ENCODE measurements at regions of chr7 and their contacts with region 1.

Region 1: DNA sequence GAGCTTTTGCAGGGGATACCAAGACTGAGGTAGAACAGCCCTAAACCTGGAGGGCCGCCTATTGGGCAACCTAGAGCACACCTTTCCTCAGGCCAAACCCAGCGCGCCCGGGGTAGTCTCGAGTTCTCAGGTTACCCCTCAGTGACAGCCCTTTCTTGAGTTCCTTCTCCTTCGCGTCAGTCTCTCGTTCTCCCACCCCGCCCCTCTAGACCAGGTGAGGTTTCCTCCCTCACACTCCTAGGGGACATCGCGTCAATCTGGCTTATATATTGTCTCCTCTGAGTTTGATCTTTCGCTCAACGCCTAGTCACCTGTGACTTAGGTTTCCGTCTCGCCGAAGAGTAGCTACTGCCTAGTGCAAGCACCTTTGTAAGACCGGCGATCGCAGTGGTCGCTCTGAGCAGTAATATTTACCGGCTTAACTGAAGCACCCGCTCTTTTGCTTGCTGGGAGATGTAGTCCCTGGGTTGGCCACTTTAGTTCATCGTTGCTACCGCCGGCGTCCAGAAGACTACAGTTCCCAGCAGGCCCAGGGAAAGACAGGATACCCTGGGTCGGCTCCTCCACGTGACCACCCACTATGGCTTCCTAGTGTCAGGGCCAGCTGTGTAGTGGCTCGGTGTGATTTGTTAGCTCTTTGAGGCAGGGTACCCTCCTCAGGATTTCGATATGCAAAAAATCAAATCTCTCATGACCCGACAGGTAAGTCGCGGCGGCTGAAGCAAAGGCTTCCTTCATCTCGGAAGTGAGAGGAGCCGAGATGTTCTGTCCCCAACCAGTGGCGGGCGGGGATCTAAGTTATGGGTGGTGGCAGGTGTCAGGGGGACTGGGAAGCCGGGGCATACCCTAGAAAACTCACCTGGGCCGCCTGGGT is at the start of gene VPS50:
- DNase-seq: peak; percentile 82 to 97 (median 91)
- ATAC-seq: peak; percentile 95
- H3K4me3 ChIP-seq: peak within 1 kb of the TSS; percentile 88 to 92
- H3K4me3 Mint-ChIP-seq: peak within 1 kb of the TSS; percentile 96
- H3K27ac ChIP-seq: peak within 1 kb of the TSS; percentile 89 to 90
- H3K27ac Mint-ChIP-seq: peak within 1 kb of the TSS; percentile 99
- H3K4me1 ChIP-seq: peaks cover 25% of the 10 kb centered on the region
- H3K4me1 Mint-ChIP-seq: peaks cover 19% of the 10 kb centered on the region
- H3K27me3 ChIP-seq: no peaks in the 10 kb centered on the region
- H3K27me3 Mint-ChIP-seq: no peaks in the 10 kb centered on the region
- CTCF ChIP-seq: no peak
- total RNA-seq, gene VPS50: 17.1 to 20.2 TPM

Region 2: GRCh38 chr7:91880413-91881241 is 1351.4 kb before region 1 on chr7 and contains the start of gene MTERF1:
- CTCF ChIA-PET with region 1: no interaction called
- POLR2A ChIA-PET with region 1: no interaction called
- intact Hi-C with region 1: loop called in 1 of 2 experiments (anchors 5 kb)
- DNase-seq: peak; percentile 82 to 96 (median 95)
- ATAC-seq: peak; percentile 96
- H3K4me3 ChIP-seq: peak within 1 kb of the TSS; percentile 78 to 90
- H3K4me3 Mint-ChIP-seq: peak within 1 kb of the TSS; percentile 94
- H3K27ac ChIP-seq: peak within 1 kb of the TSS; percentile 63 to 77
- H3K27ac Mint-ChIP-seq: peak within 1 kb of the TSS; percentile 97
- H3K4me1 ChIP-seq: peaks cover 21% of the 10 kb centered on the region
- H3K4me1 Mint-ChIP-seq: peaks cover 40% of the 10 kb centered on the region
- H3K27me3 ChIP-seq: no peaks in the 10 kb centered on the region
- H3K27me3 Mint-ChIP-seq: no peaks in the 10 kb centered on the region
- CTCF ChIP-seq: peak; percentile 97
- total RNA-seq, gene MTERF1: 12.3 to 12.5 TPM

Region 3: GRCh38 chr7:92245487-92246362 is 986.3 kb before region 1 on chr7 and contains the starts of genes ANKIB1 and KRIT1:
- CTCF ChIA-PET with region 1: no interaction called
- POLR2A ChIA-PET with region 1: no interaction called
- intact Hi-C with region 1: loop called (anchors 1 to 5 kb)
- DNase-seq: peak; percentile 65 to 93 (median 88)
- ATAC-seq: peak; percentile 74
- H3K4me3 ChIP-seq: peak within 1 kb of the TSS; percentile 86 to 90
- H3K4me3 Mint-ChIP-seq: peak within 1 kb of the TSS; percentile 98
- H3K27ac ChIP-seq: peak within 1 kb of the TSS; percentile 93 to 98
- H3K27ac Mint-ChIP-seq: peak within 1 kb of the TSS; percentile 99
- H3K4me1 ChIP-seq: peaks cover 29% of the 10 kb centered on the region
- H3K4me1 Mint-ChIP-seq: peaks cover 52% of the 10 kb centered on the region
- H3K27me3 ChIP-seq: no peaks in the 10 kb centered on the region
- H3K27me3 Mint-ChIP-seq: no peaks in the 10 kb centered on the region
- CTCF ChIP-seq: no peak
- total RNA-seq, gene ANKIB1: 51.1 to 59.6 TPM
- total RNA-seq, gene KRIT1: 25.0 to 27.0 TPM

Region 4: GRCh38 chr7:92584996-92585395 is 647.0 kb before region 1 on chr7:
- CTCF ChIA-PET with region 1: no interaction called
- POLR2A ChIA-PET with region 1: no interaction called
- intact Hi-C with region 1: loop called (anchors 1 to 2 kb)
- DNase-seq: peak in 2 of 9 experiments; percentile 28 to 53
- ATAC-seq: peak; percentile 21
- H3K4me3 ChIP-seq: no peak overlapping the region
- H3K4me3 Mint-ChIP-seq: peak overlapping the region; percentile 37
- H3K27ac ChIP-seq: peak overlapping the region in 1 of 2 experiments; percentile 13
- H3K27ac Mint-ChIP-seq: peak overlapping the region; percentile 89
- H3K4me1 ChIP-seq: peaks cover 40% of the 10 kb centered on the region
- H3K4me1 Mint-ChIP-seq: peaks cover 80% of the 10 kb centered on the region
- H3K27me3 ChIP-seq: no peaks in the 10 kb centered on the region
- H3K27me3 Mint-ChIP-seq: no peaks in the 10 kb centered on the region
- CTCF ChIP-seq: no peak

Region 5: GRCh38 chr7:92691578-92691977 is 540.5 kb before region 1 on chr7:
- CTCF ChIA-PET with region 1: no interaction called
- POLR2A ChIA-PET with region 1: no interaction called
- intact Hi-C with region 1: loop called in 1 of 2 experiments (anchors 10 kb)
- DNase-seq: peak in 3 of 9 experiments; percentile 17 to 68 (median 49)
- ATAC-seq: peak; percentile 86
- H3K4me3 ChIP-seq: no peak overlapping the region
- H3K4me3 Mint-ChIP-seq: no peak overlapping the region
- H3K27ac ChIP-seq: no peak overlapping the region
- H3K27ac Mint-ChIP-seq: no peak overlapping the region
- H3K4me1 ChIP-seq: peaks cover 11% of the 10 kb centered on the region
- H3K4me1 Mint-ChIP-seq: peaks cover 30% of the 10 kb centered on the region
- H3K27me3 ChIP-seq: no peaks in the 10 kb centered on the region
- H3K27me3 Mint-ChIP-seq: no peaks in the 10 kb centered on the region
- CTCF ChIP-seq: peak; percentile 73

Region 6: GRCh38 chr7:93117852-93118530 is 114.0 kb before region 1 on chr7 and contains the start of gene SAMD9:
- CTCF ChIA-PET with region 1: no interaction called
- POLR2A ChIA-PET with region 1: interaction called, 17 read pairs
- intact Hi-C with region 1: loop called (anchors 1 to 2 kb)
- DNase-seq: peak; percentile 18 to 91 (median 60)
- ATAC-seq: peak; percentile 99
- H3K4me3 ChIP-seq: peak within 1 kb of the TSS; percentile 61 to 64
- H3K4me3 Mint-ChIP-seq: peak within 1 kb of the TSS; percentile 80
- H3K27ac ChIP-seq: peak within 1 kb of the TSS; percentile 58 to 81
- H3K27ac Mint-ChIP-seq: peak within 1 kb of the TSS; percentile 84
- H3K4me1 ChIP-seq: peaks cover 28% of the 10 kb centered on the region
- H3K4me1 Mint-ChIP-seq: peaks cover 47% of the 10 kb centered on the region
- H3K27me3 ChIP-seq: no peaks in the 10 kb centered on the region
- H3K27me3 Mint-ChIP-seq: no peaks in the 10 kb centered on the region
- CTCF ChIP-seq: no peak
- total RNA-seq, gene SAMD9: 23.5 to 23.8 TPM

Region 7: DNA sequence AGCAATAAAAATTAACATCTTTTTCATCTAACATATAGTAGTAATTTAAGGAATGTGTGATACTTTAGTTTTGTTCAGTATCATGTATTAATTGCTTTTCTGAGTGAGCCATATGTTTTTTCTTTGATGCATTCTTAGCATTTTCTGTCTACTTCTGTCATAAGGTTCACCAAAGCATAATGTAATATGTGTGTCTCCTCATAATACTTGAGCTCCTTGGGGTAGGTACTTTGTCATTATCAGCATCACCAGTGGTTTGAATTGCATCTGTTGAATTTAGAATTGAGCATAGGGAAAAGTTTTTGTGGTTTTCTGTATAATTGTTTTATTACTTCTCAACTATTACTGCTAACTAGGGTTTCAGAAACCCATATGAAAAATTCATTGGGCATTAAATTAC is 26.6 kb after region 1 on chr7:
- CTCF ChIA-PET with region 1: no interaction called
- POLR2A ChIA-PET with region 1: no interaction called
- intact Hi-C with region 1: no loop called
- DNase-seq: no peak
- ATAC-seq: no peak
- H3K4me3 ChIP-seq: no peak overlapping the region
- H3K4me3 Mint-ChIP-seq: no peak overlapping the region
- H3K27ac ChIP-seq: no peak overlapping the region
- H3K27ac Mint-ChIP-seq: no peak overlapping the region
- H3K4me1 ChIP-seq: no peaks in the 10 kb centered on the region
- H3K4me1 Mint-ChIP-seq: no peaks in the 10 kb centered on the region
- H3K27me3 ChIP-seq: no peaks in the 10 kb centered on the region
- H3K27me3 Mint-ChIP-seq: no peaks in the 10 kb centered on the region
- CTCF ChIP-seq: no peak

Region 8: DNA sequence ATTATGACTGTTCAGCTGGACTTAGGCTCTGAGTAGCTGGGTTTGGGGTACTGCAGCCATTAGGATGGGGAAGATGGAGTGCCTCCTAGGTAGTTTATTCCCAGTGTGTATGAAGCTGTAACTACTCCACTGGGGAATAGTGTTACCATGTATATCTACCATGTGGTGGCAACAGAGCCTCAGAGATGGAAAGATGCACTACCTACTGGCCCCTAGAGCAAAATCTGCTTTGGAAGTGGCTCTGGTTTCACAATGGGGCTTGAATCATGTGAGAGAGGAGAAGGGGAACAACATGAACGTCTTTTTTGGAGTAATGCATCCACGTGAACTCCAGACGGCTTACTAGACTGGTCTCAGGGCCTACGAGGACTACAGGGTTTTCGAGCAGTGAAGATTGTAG is 175.2 kb after region 1 on chr7:
- CTCF ChIA-PET with region 1: no interaction called
- POLR2A ChIA-PET with region 1: no interaction called
- intact Hi-C with region 1: no loop called
- DNase-seq: peak in 1 of 9 experiments; percentile 17
- ATAC-seq: no peak
- H3K4me3 ChIP-seq: no peak overlapping the region
- H3K4me3 Mint-ChIP-seq: no peak overlapping the region
- H3K27ac ChIP-seq: no peak overlapping the region
- H3K27ac Mint-ChIP-seq: no peak overlapping the region
- H3K4me1 ChIP-seq: no peaks in the 10 kb centered on the region
- H3K4me1 Mint-ChIP-seq: no peaks in the 10 kb centered on the region
- H3K27me3 ChIP-seq: no peaks in the 10 kb centered on the region
- H3K27me3 Mint-ChIP-seq: no peaks in the 10 kb centered on the region
- CTCF ChIP-seq: no peak

Region 9: GRCh38 chr7:94004024-94004951 is 772.3 kb after region 1 on chr7 and contains the start of gene BET1:
- CTCF ChIA-PET with region 1: no interaction called
- POLR2A ChIA-PET with region 1: no interaction called
- intact Hi-C with region 1: loop called (anchors 1 kb)
- DNase-seq: peak; percentile 84 to 98 (median 93)
- ATAC-seq: peak; percentile 93
- H3K4me3 ChIP-seq: peak within 1 kb of the TSS; percentile 84 to 91
- H3K4me3 Mint-ChIP-seq: peak within 1 kb of the TSS; percentile 99
- H3K27ac ChIP-seq: peak within 1 kb of the TSS; percentile 90
- H3K27ac Mint-ChIP-seq: peak within 1 kb of the TSS; percentile 99
- H3K4me1 ChIP-seq: peaks cover 11% of the 10 kb centered on the region
- H3K4me1 Mint-ChIP-seq: peaks cover 40% of the 10 kb centered on the region
- H3K27me3 ChIP-seq: no peaks in the 10 kb centered on the region
- H3K27me3 Mint-ChIP-seq: peaks cover 4% of the 10 kb centered on the region
- CTCF ChIP-seq: no peak
- total RNA-seq, gene BET1: 6.2 TPM